ENCODE measurements at regions of chr5 and their contacts with region 1.

Region 1: GRCh38 chr5:80407735-80408482 is at the start of gene ZFYVE16:
- DNase-seq: peak; percentile 95
- H3K4me3 Mint-ChIP-seq: peak within 1 kb of the TSS; percentile 96
- H3K27ac Mint-ChIP-seq: peak within 1 kb of the TSS; percentile 100
- H3K4me1 Mint-ChIP-seq: peaks cover 25% of the 10 kb centered on the region
- H3K27me3 Mint-ChIP-seq: peaks cover 6% of the 10 kb centered on the region
- total RNA-seq, gene ZFYVE16: 9.4 and 10.3 TPM in 2 replicates

Region 2: DNA sequence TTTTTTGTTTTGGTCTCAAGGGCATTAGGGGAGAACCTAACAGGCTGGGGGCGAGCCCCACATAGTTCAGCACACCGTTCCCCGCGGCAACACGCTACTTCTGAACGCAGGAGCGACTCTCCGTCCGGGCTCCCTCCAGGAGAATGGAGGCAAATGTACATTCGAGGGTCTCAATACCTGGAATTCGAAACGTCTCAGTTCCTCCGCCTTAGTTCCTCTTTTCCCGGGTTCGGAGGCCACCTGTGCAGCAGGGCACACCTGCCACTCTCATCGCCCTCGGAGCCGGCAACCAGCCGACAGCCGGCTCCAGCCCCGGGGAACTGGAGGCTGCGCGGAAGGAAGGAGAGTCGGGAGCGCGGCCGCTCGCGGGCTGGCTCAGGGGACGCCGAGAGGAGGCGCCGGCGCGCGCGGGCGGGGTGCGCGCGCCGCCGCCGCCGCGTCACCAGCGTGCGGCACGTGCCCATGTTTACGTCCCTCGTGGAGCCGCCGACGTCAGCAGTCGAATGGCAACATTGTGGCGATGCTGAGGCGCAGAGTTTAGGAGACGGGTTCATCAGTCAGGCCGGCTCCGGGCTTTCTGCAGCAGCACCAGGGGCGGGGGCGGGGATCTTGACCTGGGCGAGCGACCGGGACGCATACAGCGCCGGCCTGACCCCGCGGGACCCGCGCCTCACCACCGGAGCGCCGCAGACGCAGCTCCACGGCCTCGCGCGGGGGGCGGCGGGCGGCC is 1172.1 kb before region 1 on chr5 and contains the start of gene JMY:
- intact Hi-C with region 1: loop called (anchors 5 kb)
- DNase-seq: peak; percentile 77
- H3K4me3 Mint-ChIP-seq: peak within 1 kb of the TSS; percentile 94
- H3K27ac Mint-ChIP-seq: peak within 1 kb of the TSS; percentile 95
- H3K4me1 Mint-ChIP-seq: peaks cover 33% of the 10 kb centered on the region
- H3K27me3 Mint-ChIP-seq: peaks cover 2% of the 10 kb centered on the region
- total RNA-seq, gene JMY: 5.5 and 5.9 TPM in 2 replicates

Region 3: DNA sequence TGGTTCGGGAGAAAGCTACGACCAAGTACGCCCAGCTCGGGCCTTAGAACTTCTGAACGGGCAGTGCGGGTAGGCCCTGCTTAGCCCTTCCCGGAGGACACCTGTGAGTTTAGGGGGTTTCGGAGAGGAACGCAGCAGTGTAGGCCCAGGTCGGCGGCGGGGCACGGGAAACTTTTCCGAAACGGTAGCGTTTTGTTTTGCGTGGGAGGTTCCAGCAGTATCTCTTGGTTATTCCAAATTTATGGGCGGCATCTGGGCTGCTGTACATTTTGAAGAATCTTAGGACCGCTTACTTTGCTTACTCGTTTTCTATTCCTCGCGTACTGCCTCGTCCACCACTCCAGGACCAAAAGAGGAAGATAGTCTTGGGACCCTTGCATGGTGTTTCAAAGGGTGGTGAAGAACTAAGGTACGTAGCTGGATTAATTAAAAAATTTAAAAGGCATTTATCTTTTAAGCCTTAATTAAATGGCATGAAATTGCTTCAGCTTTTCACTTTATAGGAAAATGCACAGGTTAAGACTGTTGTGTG is 795.2 kb before region 1 on chr5:
- intact Hi-C with region 1: loop called (anchors 2 kb)
- DNase-seq: no peak
- H3K4me3 Mint-ChIP-seq: peak overlapping the region; percentile 91
- H3K27ac Mint-ChIP-seq: peak overlapping the region; percentile 97
- H3K4me1 Mint-ChIP-seq: peaks cover 45% of the 10 kb centered on the region
- H3K27me3 Mint-ChIP-seq: no peaks in the 10 kb centered on the region

Region 4: DNA sequence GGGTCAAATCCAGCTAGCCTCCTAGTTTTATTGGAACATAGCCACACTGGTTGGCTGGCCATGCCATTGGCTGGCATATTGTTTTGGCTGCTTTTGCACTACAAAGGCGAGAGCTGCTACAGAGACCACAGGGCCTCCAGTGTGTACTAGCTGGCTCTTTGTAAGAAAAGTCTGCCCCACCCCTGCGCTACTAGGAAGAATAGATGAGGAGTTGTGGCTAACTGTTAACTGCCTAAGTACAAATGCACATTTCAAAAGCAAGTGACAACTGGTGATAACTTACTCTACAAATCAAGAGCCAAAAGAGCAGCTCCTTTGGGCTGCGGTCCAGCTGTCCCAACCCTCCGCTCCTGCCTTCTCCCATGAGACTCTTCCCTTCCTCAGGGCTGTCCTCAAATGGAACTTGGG is 215.9 kb before region 1 on chr5:
- intact Hi-C with region 1: loop called (anchors 5 kb)
- DNase-seq: peak; percentile 47
- H3K4me3 Mint-ChIP-seq: peak overlapping the region; percentile 62
- H3K27ac Mint-ChIP-seq: peak overlapping the region; percentile 86
- H3K4me1 Mint-ChIP-seq: peaks cover 86% of the 10 kb centered on the region
- H3K27me3 Mint-ChIP-seq: no peaks in the 10 kb centered on the region

Region 5: GRCh38 chr5:80387063-80387768 is 20.7 kb before region 1 on chr5:
- intact Hi-C with region 1: no loop called
- DNase-seq: no peak
- H3K4me3 Mint-ChIP-seq: no peak overlapping the region
- H3K27ac Mint-ChIP-seq: no peak overlapping the region
- H3K4me1 Mint-ChIP-seq: no peaks in the 10 kb centered on the region
- H3K27me3 Mint-ChIP-seq: peaks cover 11% of the 10 kb centered on the region

Region 6: DNA sequence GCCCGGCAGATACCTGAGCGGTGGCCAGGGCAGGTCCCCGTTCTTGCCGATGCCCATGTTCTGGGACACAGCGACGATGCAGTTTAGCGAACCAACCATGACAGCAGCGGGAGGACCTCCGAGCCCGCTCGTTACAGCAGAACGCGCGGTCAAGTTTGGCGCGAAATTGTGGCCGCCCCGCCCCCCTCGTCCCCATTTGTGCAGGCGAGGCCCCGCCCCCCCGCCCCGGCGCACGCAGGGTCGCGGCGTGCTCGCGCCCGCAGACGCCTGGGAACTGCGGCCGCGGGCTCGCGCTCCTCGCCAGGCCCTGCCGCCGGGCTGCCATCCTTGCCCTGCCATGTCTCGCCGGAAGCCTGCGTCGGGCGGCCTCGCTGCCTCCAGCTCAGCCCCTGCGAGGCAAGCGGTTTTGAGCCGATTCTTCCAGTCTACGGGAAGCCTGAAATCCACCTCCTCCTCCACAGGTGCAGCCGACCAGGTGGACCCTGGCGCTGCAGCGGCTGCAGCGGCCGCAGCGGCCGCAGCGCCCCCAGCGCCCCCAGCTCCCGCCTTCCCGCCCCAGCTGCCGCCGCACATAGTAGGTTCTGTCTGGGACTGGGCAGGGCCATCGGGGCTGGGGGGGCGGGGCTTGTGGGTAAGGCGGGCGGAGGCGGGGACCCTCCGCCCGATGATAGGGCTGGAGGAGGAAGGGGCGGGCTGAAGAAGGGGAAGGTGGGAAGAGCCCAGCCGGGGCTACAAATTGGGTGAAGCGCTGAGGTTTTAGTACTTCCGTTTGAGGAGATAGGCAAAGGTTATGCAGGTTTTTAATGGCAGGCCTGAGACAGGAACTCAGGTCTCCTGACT is 246.7 kb after region 1 on chr5 and contains the starts of genes DHFR and MSH3:
- intact Hi-C with region 1: loop called (anchors 1 kb)
- DNase-seq: peak; percentile 84
- H3K4me3 Mint-ChIP-seq: peak within 1 kb of the TSS; percentile 93
- H3K27ac Mint-ChIP-seq: peak within 1 kb of the TSS; percentile 98
- H3K4me1 Mint-ChIP-seq: peaks cover 37% of the 10 kb centered on the region
- H3K27me3 Mint-ChIP-seq: no peaks in the 10 kb centered on the region
- total RNA-seq, gene DHFR: 55.9 and 60.3 TPM in 2 replicates
- total RNA-seq, gene MSH3: 20.2 and 20.7 TPM in 2 replicates

Region 7: GRCh38 chr5:81006947-81007636 is 599.2 kb after region 1 on chr5:
- intact Hi-C with region 1: loop called (anchors 5 kb)
- DNase-seq: peak; percentile 50
- H3K4me3 Mint-ChIP-seq: peak overlapping the region; percentile 71
- H3K27ac Mint-ChIP-seq: peak overlapping the region; percentile 81
- H3K4me1 Mint-ChIP-seq: peaks cover 54% of the 10 kb centered on the region
- H3K27me3 Mint-ChIP-seq: no peaks in the 10 kb centered on the region

Measured in activated T-helper 1 cell treated with anti-CD3 and anti-CD28 coated beads, Interleukin-12 subunit alpha, Interleukin-12 subunit beta, Interleukin-2, Interleukin-4 antibody, amounts not matched to agents 30 ng/mL and 10 ng/mL and 1 ng/mL, durations not matched to agents 14 hours and 24 hours and 36 hours (primary cell).